Caco-2 (cell line): ENCODE measurements at regions of chr21 and their contacts with region 1.

Region 1: GRCh38 chr21:28089599-28090441 is 902.9 kb downstream of the LTN1 start:
- DNase-seq: peak; percentile 59 to 83
- H3K4me3 ChIP-seq: peak overlapping the region; percentile 29
- H3K4me3 Mint-ChIP-seq: peak overlapping the region; percentile 82
- H3K27ac Mint-ChIP-seq: peak overlapping the region; percentile 94
- H3K4me1 ChIP-seq: peaks cover 20% of the 10 kb centered on the region
- H3K4me1 Mint-ChIP-seq: peaks cover 9% of the 10 kb centered on the region
- H3K27me3 ChIP-seq: no peaks in the 10 kb centered on the region
- H3K27me3 Mint-ChIP-seq: no peaks in the 10 kb centered on the region
- CTCF ChIP-seq: peak in 1 of 2 experiments; percentile 31

Region 2: GRCh38 chr21:28106370-28106890 is 16.6 kb after region 1 on chr21:
- CTCF ChIA-PET with region 1: no interaction called
- POLR2A ChIA-PET with region 1: no interaction called
- intact Hi-C with region 1: loop called (anchors 2 kb)
- DNase-seq: no peak
- H3K4me3 ChIP-seq: no peak overlapping the region
- H3K4me3 Mint-ChIP-seq: no peak overlapping the region
- H3K27ac Mint-ChIP-seq: no peak overlapping the region
- H3K4me1 ChIP-seq: peaks cover 12% of the 10 kb centered on the region
- H3K4me1 Mint-ChIP-seq: peaks cover 23% of the 10 kb centered on the region
- H3K27me3 ChIP-seq: no peaks in the 10 kb centered on the region
- H3K27me3 Mint-ChIP-seq: no peaks in the 10 kb centered on the region
- CTCF ChIP-seq: no peak

Region 3: DNA sequence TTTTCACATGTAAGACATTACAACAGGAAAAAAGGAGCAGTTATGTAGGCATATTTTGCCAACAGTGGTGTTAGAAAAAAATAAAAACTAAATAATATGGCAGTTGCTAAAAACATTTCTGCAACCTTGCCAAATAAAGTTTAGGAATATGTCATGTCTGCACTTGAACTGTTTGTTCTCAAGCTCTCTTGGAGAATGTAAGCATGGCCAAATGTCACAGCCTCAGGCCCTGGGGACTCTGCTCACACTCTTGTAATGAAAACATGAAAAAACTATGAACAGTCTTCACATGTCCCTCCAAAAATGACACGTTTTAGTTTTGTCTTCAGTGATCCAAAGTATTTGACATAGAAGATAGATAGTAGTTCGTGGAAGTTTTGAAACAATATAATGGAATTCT is 149.5 kb after region 1 on chr21:
- CTCF ChIA-PET with region 1: interaction called, 4 read pairs
- POLR2A ChIA-PET with region 1: no interaction called
- intact Hi-C with region 1: loop called (anchors 5 kb)
- DNase-seq: no peak
- H3K4me3 ChIP-seq: no peak overlapping the region
- H3K4me3 Mint-ChIP-seq: no peak overlapping the region
- H3K27ac Mint-ChIP-seq: no peak overlapping the region
- H3K4me1 ChIP-seq: peaks cover 46% of the 10 kb centered on the region
- H3K4me1 Mint-ChIP-seq: peaks cover 26% of the 10 kb centered on the region
- H3K27me3 ChIP-seq: no peaks in the 10 kb centered on the region
- H3K27me3 Mint-ChIP-seq: no peaks in the 10 kb centered on the region
- CTCF ChIP-seq: no peak

Region 4: GRCh38 chr21:28256420-28256831 is 166.6 kb after region 1 on chr21:
- CTCF ChIA-PET with region 1: no interaction called
- POLR2A ChIA-PET with region 1: no interaction called
- intact Hi-C with region 1: loop called (anchors 1 kb)
- DNase-seq: peak; percentile 79 to 86
- H3K4me3 ChIP-seq: no peak overlapping the region
- H3K4me3 Mint-ChIP-seq: peak overlapping the region; percentile 53
- H3K27ac Mint-ChIP-seq: peak overlapping the region; percentile 69
- H3K4me1 ChIP-seq: peaks cover 44% of the 10 kb centered on the region
- H3K4me1 Mint-ChIP-seq: peaks cover 44% of the 10 kb centered on the region
- H3K27me3 ChIP-seq: no peaks in the 10 kb centered on the region
- H3K27me3 Mint-ChIP-seq: no peaks in the 10 kb centered on the region
- CTCF ChIP-seq: no peak

Region 5: GRCh38 chr21:28283641-28284490 is 194.0 kb after region 1 on chr21:
- CTCF ChIA-PET with region 1: no interaction called
- POLR2A ChIA-PET with region 1: no interaction called
- intact Hi-C with region 1: loop called (anchors 5 kb)
- DNase-seq: peak; percentile 67 to 69
- H3K4me3 ChIP-seq: no peak overlapping the region
- H3K4me3 Mint-ChIP-seq: peak overlapping the region; percentile 28
- H3K27ac Mint-ChIP-seq: peak overlapping the region; percentile 0
- H3K4me1 ChIP-seq: peaks cover 23% of the 10 kb centered on the region
- H3K4me1 Mint-ChIP-seq: peaks cover 29% of the 10 kb centered on the region
- H3K27me3 ChIP-seq: no peaks in the 10 kb centered on the region
- H3K27me3 Mint-ChIP-seq: no peaks in the 10 kb centered on the region
- CTCF ChIP-seq: no peak